MCF 10A (cell line): ENCODE measurements at regions of chr1 and their contacts with region 1.

Region 1: GRCh38 chr1:155466996-155467395 is 95.6 kb downstream of the ASH1L start:
- DNase-seq: peak; percentile 68
- H3K4me3 Mint-ChIP-seq: no peak overlapping the region
- H3K27ac Mint-ChIP-seq: peak overlapping the region; percentile 4
- H3K4me1 Mint-ChIP-seq: peaks cover 18% of the 10 kb centered on the region
- H3K27me3 Mint-ChIP-seq: no peaks in the 10 kb centered on the region
- CTCF ChIP-seq: no peak

Region 2: DNA sequence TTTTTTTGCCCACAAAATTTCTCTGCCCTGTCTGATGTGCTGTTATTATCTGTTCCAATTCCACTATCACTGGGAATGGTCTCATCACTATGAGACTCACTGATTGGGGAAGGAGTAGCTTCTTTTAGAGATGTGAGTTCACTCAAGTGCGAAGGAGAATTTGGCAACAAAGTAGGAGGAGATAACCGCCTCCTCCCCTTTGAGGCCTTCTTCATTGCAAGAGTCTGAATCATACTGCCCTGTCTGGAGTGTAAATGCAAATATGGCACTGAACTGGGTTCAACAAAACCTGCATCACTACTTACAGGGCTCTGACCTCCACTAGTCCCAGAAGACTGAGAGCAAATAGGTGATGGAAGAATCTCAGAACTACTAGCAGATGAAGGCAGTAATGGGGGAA is 12.2 kb after region 1 on chr1:
- CTCF ChIA-PET with region 1: no interaction called
- POLR2A ChIA-PET with region 1: interaction called, 13 read pairs
- intact Hi-C with region 1: no loop called
- DNase-seq: peak; percentile 50
- H3K4me3 Mint-ChIP-seq: no peak overlapping the region
- H3K27ac Mint-ChIP-seq: no peak overlapping the region
- H3K4me1 Mint-ChIP-seq: peaks cover 17% of the 10 kb centered on the region
- H3K27me3 Mint-ChIP-seq: no peaks in the 10 kb centered on the region
- CTCF ChIP-seq: no peak